GM12878 (cell line): ENCODE measurements at regions of chr15 and their contacts with region 1.

Region 1: DNA sequence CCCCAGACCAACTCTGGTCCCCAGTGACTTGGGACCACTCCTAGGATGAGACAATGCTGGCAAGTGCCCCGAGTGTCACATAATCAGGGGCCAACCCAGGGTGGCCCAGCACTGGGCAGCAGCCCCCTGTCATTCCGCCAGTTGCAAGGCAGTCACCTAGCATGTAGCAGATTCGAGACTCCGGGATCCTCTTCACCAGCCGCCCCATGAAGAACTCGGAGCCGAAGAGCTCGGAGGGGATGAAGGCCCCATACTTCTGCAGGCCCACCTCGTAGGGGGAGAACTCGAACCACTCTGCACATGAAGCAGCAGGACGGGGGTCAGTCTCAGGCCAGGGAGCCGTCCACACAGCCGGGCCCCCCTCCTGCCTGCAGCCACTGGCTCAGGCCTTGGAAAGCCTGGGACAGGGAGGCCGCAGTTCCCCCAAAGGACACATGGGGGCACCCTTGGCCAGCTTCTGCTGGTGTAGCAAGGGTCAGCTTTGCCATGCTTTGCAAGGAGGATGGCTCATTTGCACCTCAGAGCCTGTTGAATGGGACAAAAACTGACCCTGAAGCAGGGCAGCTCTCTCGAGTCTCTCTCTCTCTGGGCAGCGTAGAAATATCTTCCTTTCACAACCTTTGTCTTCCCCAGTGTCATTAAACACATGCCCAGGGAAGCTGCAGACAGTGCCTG is 17.0 kb upstream of the EHD4 start:
- DNase-seq: no peak
- ATAC-seq: peak; percentile 99
- H3K4me3 ChIP-seq: no peak overlapping the region
- H3K27ac ChIP-seq: no peak overlapping the region
- H3K4me1 ChIP-seq: no peaks in the 10 kb centered on the region
- H3K27me3 ChIP-seq: no peaks in the 10 kb centered on the region; a peak in 1 of 4 replicates
- CTCF ChIP-seq: peak; percentile 99 to 100 (median 99); a peak in 5 of 6 replicates
- EP300 ChIP-seq: no peak
- POLR2A ChIP-seq: no peak
- RAD21 ChIP-seq: peak; percentile 100

Region 2: DNA sequence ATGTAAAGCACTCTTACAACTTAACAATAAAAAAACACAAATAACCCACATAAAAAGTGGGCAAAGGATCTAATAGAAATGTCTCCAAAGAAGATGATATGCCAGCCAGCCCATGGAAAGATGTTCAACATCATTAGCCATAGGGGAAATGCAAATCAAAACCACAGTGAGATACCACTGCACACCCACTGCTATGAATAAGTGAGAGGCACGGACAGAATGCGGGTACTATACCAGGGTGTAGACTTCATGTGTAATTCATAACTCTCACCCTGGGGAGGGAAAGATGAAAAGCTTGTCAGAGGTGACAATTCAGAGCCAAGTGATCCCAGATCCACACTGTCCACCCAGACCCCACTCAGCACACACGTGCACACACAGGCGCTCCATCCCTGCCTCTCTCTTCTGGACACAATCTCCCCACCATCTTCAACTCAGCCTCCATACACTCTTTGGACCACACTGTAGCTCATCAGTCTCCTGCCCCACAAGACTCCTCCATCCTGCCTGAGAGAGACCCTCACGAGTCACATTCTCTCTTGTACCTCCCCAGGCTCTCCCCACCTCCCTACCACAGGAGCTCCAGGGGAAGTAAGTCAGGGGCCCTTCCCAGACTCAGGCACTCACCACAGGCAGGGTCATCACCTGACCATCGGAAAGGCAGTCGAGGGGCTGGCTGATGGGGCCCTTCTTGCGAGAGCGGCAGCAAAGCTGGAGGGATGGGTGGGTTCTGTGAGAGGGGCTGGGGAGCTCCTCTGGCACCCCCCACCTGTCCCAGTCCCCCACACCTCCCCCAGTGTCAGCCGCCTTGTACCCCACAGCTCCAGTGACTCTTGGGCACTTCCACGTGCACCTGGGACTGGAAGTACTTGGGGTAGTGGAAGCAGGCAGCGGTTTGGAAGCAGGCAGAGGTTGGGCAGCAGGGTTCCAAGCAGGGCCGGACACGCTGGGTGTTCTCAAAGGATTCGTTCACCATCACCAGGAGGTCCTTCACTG is 10.2 kb after region 1 on chr15:
- CTCF ChIA-PET with region 1: interaction called, 26 read pairs
- POLR2A ChIA-PET with region 1: no interaction called
- RAD21 ChIA-PET with region 1: no interaction called
- SMC1A ChIA-PET with region 1: interaction called, 4 read pairs
- in situ Hi-C with region 1: no loop called
- intact Hi-C with region 1: no loop called
- DNase-seq: no peak
- ATAC-seq: peak; percentile 68
- H3K4me3 ChIP-seq: no peak overlapping the region
- H3K27ac ChIP-seq: no peak overlapping the region
- H3K4me1 ChIP-seq: no peaks in the 10 kb centered on the region
- H3K27me3 ChIP-seq: no peaks in the 10 kb centered on the region
- CTCF ChIP-seq: no peak
- EP300 ChIP-seq: no peak
- POLR2A ChIP-seq: no peak
- RAD21 ChIP-seq: no peak

Region 3: GRCh38 chr15:42056934-42057779 is 67.8 kb after region 1 on chr15:
- CTCF ChIA-PET with region 1: interaction called, 137 read pairs
- POLR2A ChIA-PET with region 1: interaction called, 3 read pairs
- RAD21 ChIA-PET with region 1: interaction called, 38 read pairs
- SMC1A ChIA-PET with region 1: interaction called, 49 read pairs
- in situ Hi-C with region 1: loop called (anchors 5 kb)
- intact Hi-C with region 1: loop called (anchors 1 kb)
- DNase-seq: no peak
- ATAC-seq: peak; percentile 98
- H3K4me3 ChIP-seq: no peak overlapping the region
- H3K27ac ChIP-seq: no peak overlapping the region
- H3K4me1 ChIP-seq: peaks cover 4% of the 10 kb centered on the region; the same call in 1 of the 2 replicates
- H3K27me3 ChIP-seq: peaks cover 0 to 4% of the 10 kb centered on the region in 2 experiments; a peak in 2 of 4 replicates
- CTCF ChIP-seq: peak; percentile 67 to 80 (median 74)
- EP300 ChIP-seq: no peak
- POLR2A ChIP-seq: no peak
- RAD21 ChIP-seq: peak; percentile 69

Region 4: GRCh38 chr15:42072141-42072685 is 82.8 kb after region 1 on chr15:
- CTCF ChIA-PET with region 1: interaction called, 11 read pairs
- POLR2A ChIA-PET with region 1: no interaction called
- RAD21 ChIA-PET with region 1: interaction called, 4 read pairs
- SMC1A ChIA-PET with region 1: no interaction called
- in situ Hi-C with region 1: no loop called
- intact Hi-C with region 1: no loop called
- DNase-seq: no peak
- ATAC-seq: no peak
- H3K4me3 ChIP-seq: no peak overlapping the region
- H3K27ac ChIP-seq: no peak overlapping the region
- H3K4me1 ChIP-seq: no peaks in the 10 kb centered on the region
- H3K27me3 ChIP-seq: no peaks in the 10 kb centered on the region; a peak in 1 of 4 replicates
- CTCF ChIP-seq: no peak
- EP300 ChIP-seq: no peak
- POLR2A ChIP-seq: no peak
- RAD21 ChIP-seq: no peak

Region 5: GRCh38 chr15:42084460-42085235 is 95.3 kb after region 1 on chr15:
- CTCF ChIA-PET with region 1: interaction called, 27 read pairs
- POLR2A ChIA-PET with region 1: interaction called, 3 read pairs
- RAD21 ChIA-PET with region 1: interaction called, 10 read pairs
- SMC1A ChIA-PET with region 1: interaction called, 15 read pairs
- in situ Hi-C with region 1: no loop called
- intact Hi-C with region 1: loop called (anchors 1 kb)
- DNase-seq: no peak
- ATAC-seq: peak; percentile 96
- H3K4me3 ChIP-seq: no peak overlapping the region
- H3K27ac ChIP-seq: no peak overlapping the region
- H3K4me1 ChIP-seq: no peaks in the 10 kb centered on the region
- H3K27me3 ChIP-seq: no peaks in the 10 kb centered on the region; a peak in 1 of 4 replicates
- CTCF ChIP-seq: peak; percentile 89 to 94 (median 91)
- EP300 ChIP-seq: no peak
- POLR2A ChIP-seq: no peak
- RAD21 ChIP-seq: peak; percentile 72

Region 6: DNA sequence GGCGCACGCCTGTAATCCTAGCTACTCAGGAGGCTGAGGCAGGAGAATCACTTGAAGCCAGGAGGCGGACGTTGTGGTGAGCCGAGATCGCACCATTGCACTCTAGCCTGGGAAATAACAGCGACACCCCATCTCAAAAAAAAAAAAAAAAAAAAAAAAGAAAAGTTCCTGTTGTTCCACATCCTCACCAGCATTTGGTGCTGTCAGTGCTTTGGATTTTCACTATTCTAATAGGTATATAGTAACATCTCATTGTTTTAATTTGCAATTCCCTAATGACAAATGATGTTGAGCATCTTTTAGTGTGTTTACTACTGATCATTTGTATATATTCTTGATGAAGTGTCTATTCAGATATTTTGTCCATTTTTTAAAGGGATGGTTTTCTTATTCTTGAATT is 1091.9 kb after region 1 on chr15:
- CTCF ChIA-PET with region 1: no interaction called
- POLR2A ChIA-PET with region 1: no interaction called
- RAD21 ChIA-PET with region 1: no interaction called
- SMC1A ChIA-PET with region 1: no interaction called
- in situ Hi-C with region 1: no loop called
- intact Hi-C with region 1: no loop called
- DNase-seq: no peak
- ATAC-seq: no peak
- H3K4me3 ChIP-seq: no peak overlapping the region
- H3K27ac ChIP-seq: no peak overlapping the region
- H3K4me1 ChIP-seq: no peaks in the 10 kb centered on the region
- H3K27me3 ChIP-seq: no peaks in the 10 kb centered on the region
- CTCF ChIP-seq: no peak
- EP300 ChIP-seq: no peak
- POLR2A ChIP-seq: no peak
- RAD21 ChIP-seq: no peak